SK-N-SH (cell line): ENCODE measurements at regions of chr4 and their contacts with region 1.

Region 1: DNA sequence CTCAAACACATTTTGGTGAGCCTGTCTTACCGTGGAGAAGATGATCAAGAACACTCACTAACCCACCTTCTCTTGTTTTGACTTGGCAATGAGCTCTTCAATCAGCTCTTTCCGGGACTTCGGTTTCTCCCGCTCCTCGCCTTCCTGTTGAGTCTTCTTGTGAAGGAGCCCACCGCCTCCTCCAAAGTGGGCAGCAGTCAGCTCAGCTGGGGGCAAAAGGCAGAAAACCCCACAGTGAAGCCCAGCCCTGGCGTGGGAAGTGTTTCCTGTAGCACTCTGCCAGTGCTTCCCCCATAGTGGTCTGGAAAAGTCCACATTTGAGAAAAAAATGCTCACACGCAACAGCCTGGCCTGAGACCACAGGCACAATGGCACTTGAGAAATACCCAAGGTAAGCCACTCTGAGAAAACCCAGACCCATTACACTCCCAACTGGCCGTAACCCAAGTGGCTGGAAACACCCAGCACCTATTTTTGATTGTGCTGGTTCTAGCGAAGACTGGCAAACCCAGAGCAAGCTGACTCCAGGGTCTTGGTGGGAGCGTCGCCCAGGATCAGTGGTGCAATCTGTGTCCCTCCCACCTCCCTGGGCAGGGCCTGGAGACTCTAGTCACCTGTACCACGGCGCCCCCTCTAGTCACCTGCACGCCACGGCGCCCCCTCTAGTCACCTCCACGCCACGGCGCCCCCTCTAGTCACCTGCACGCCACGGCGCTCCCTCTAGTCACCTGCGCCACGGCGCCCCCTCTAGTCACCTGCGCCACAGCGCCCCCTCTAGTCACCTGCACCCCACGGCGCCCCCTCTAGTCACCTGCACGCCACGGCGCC is 8.6 kb downstream of the NOP14 start:
- DNase-seq: peak; percentile 61
- H3K4me3 ChIP-seq: no peak overlapping the region
- H3K27ac ChIP-seq: no peak overlapping the region
- H3K4me1 ChIP-seq: no peaks in the 10 kb centered on the region
- H3K27me3 ChIP-seq: no peaks in the 10 kb centered on the region
- CTCF ChIP-seq: no peak
- EP300 ChIP-seq: no peak
- RAD21 ChIP-seq: no peak

Region 2: GRCh38 chr4:2934813-2935761 is 19.5 kb before region 1 on chr4:
- CTCF ChIA-PET with region 1: interaction called, 19 read pairs
- POLR2A ChIA-PET with region 1: no interaction called
- DNase-seq: peak; percentile 96
- H3K4me3 ChIP-seq: peak overlapping the region; percentile 98 to 99
- H3K27ac ChIP-seq: peak overlapping the region; percentile 74 to 85
- H3K4me1 ChIP-seq: peaks cover 20 to 43% of the 10 kb centered on the region in 2 experiments
- H3K27me3 ChIP-seq: no peaks in the 10 kb centered on the region
- CTCF ChIP-seq: no peak
- EP300 ChIP-seq: no peak
- RAD21 ChIP-seq: no peak

Region 3: DNA sequence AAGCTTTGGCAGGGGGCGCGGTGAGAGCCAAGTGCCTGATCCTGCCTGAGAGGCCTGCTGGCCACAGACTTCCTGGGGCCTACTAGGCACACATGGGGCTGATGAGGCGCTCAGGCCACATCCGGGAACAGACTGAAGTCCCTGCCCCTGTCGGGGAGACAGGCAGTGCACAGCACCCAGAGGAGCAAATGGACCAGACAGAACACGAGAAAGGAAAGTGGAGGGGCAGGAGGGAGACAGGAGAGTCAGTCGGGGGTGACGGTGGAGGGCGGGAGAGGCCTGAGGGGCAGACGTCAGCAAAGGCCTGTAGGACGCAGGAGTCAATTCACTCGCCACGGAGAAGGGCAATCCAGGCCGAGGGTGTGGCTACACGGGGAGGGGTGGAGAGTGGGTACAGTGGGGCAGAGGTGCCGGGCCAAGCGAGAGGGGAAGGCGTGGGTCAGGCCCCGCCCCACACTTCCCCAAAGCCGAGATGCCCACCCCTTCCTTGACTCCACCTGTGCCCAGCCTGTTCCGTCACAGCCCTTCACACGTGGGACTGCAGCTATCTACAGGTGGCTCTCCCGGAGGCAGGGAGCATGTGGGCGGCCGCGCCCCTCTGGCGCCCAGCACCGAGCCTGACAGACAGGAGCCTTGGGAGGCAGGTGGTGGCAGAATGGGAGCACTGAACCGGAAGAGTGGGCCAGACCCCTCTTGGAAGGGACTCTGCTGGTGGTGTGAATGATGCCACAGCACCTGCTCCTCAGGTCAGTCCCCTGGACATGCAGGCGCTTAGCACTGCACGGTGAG is 11.8 kb before region 1 on chr4:
- CTCF ChIA-PET with region 1: interaction called, 30 read pairs
- POLR2A ChIA-PET with region 1: no interaction called
- DNase-seq: no peak
- H3K4me3 ChIP-seq: no peak overlapping the region
- H3K27ac ChIP-seq: no peak overlapping the region; a peak in 1 of 4 replicates
- H3K4me1 ChIP-seq: peaks cover 0 to 2% of the 10 kb centered on the region in 2 experiments; a peak in 1 of 4 replicates
- H3K27me3 ChIP-seq: no peaks in the 10 kb centered on the region
- CTCF ChIP-seq: no peak
- EP300 ChIP-seq: no peak
- RAD21 ChIP-seq: no peak